ENCODE measurements at regions of chr13 and their contacts with region 1.

Region 1: GRCh38 chr13:72638059-72638815 is 89.2 kb downstream of the MZT1 start:
- DNase-seq: no peak

Region 2: GRCh38 chr13:72586518-72586917 is 51.7 kb before region 1 on chr13:
- intact Hi-C with region 1: loop called in 1 of 2 experiments (anchors 2 kb)
- DNase-seq: no peak

Region 3: DNA sequence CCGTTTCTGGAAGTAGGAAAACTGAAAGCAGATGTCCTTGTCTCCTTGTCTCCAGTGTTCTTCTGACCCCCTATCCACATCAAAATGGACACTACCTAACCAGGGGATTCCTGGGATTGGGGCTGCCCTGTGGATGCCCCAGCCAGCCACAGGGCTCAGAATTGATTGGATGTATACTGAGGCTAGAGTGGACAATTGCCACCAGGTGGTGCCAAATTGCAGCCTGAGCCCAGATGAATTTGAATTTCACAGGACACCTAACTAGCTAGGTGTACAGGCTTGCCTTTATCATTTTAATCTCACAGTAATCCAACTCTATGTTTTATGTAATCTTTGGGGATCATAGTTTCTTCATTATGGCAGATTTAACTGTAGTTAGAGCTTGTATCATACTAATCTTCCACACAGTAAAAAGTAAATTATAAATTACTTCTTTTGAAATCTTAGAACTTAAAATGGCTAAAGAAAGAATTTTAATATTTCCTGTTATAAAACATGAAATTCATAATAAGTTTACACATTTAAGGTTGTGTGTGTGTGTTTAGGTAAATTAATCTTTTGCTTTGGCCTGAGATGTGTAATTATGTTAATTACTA is 201.7 kb after region 1 on chr13:
- intact Hi-C with region 1: no loop called
- DNase-seq: no peak

Region 4: GRCh38 chr13:73119612-73120011 is 481.4 kb after region 1 on chr13:
- intact Hi-C with region 1: loop called in 1 of 2 experiments (anchors 5 kb)
- DNase-seq: no peak

Measured in posterior vena cava (tissue), 2 donors.